Activated CD8-positive, alpha-beta memory T cell treated with anti-CD3 and anti-CD28 coated beads, Interleukin-2, amount 10 ng/mL, durations not matched to agents 7 days and 5 days (primary cell): ENCODE measurements at regions of chr16 and their contacts with region 1.

Region 1: GRCh38 chr16:1300664-1301476 is 8.6 kb upstream of the UBE2I start:
- DNase-seq: peak; percentile 84
- ATAC-seq: peak; percentile 77
- H3K4me3 Mint-ChIP-seq: no peak overlapping the region
- H3K27ac Mint-ChIP-seq: no peak overlapping the region
- H3K4me1 Mint-ChIP-seq: peaks cover 32% of the 10 kb centered on the region
- H3K27me3 Mint-ChIP-seq: peaks cover 4% of the 10 kb centered on the region

Region 2: GRCh38 chr16:1167276-1168107 is 133.4 kb before region 1 on chr16:
- CTCF ChIA-PET with region 1: no interaction called
- DNase-seq: no peak
- ATAC-seq: no peak
- H3K4me3 Mint-ChIP-seq: no peak overlapping the region
- H3K27ac Mint-ChIP-seq: no peak overlapping the region
- H3K4me1 Mint-ChIP-seq: no peaks in the 10 kb centered on the region
- H3K27me3 Mint-ChIP-seq: no peaks in the 10 kb centered on the region

Region 3: DNA sequence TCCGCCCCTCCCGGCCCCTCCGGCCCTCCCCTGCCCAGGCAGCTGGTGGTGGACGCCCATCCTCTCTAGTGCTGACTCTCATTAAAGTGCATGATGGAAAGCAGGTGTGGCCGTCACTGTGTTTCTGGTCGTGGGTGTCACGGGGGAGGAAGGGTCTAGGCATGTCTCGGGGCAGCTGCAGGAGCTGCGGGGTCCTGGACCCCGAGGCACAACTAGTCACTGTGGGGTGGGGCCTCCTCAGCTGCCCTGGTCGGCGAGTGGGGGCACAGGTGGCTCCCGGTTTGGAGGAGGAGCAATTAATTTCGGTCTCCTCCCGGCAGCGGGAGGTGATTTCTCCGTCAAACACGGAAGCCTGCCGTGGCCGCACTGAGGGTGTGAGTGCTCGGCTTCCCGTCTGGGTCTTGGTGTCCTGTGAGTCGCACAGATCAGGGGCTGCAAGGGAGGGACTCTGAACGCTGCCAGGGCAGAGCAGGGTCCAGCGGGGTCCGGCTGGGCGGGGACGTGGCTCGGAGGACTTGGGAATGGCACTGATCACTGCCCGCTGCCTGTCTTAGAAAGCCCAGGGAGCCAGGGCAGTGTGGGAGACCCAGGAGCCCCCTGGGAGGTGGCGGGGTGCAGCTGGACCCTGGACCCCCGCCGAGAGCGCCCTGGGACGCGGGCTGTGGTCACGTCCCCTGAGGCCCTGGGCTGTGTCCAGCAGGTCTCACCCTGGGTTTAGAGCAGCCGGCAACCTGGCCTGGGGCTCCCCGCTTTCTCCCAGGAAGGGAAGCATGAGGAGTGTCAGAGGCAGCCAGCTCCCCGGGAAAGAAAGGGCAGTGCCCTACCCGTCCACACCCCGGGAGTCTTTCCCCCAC is 41.7 kb before region 1 on chr16:
- CTCF ChIA-PET with region 1: no interaction called
- DNase-seq: no peak
- ATAC-seq: no peak
- H3K4me3 Mint-ChIP-seq: no peak overlapping the region
- H3K27ac Mint-ChIP-seq: no peak overlapping the region
- H3K4me1 Mint-ChIP-seq: peaks cover 2% of the 10 kb centered on the region
- H3K27me3 Mint-ChIP-seq: peaks cover 18% of the 10 kb centered on the region

Region 4: DNA sequence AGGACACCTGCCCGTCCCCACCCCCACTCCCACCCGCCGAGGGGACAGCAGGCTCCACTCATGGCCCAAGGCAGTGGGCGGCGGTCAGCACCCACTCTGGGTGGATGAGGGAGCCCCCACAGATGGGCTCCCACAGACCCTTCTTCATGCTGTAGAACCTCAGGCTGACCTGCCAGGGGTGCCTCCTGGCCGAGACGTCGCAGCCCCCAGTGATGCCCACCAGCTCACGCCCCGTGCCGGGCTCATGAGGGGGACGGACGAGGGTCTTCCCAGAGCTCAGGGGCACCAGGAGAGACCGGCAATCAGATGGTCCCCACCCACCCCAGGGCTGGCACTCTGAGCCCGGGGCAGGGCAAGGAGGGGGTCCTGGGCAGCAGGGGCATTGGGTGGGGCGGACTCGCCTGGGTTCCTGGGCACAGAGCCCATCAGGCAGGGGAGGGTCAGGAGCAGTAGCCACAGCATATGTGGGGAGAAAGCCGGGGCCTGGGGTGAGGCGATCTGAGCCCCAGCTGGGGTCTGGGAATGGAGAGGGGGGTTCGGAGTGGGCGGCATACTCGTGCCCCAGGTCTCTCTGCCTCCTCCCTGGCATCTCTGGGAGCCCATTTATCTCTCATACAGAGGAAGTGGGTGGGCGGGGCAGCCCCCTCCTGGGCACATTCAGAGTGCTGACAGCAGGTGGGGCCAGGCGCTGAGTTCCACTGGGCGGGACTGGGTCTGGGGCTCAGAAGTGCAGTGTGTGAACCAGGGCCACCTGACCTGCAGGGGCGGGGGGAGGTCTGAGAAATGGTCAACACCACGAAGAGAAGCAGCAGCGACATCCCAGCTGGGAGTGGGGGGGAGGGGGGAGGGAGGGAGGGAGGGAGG is 12.0 kb before region 1 on chr16:
- CTCF ChIA-PET with region 1: interaction called, 10 read pairs
- DNase-seq: no peak
- ATAC-seq: no peak
- H3K4me3 Mint-ChIP-seq: no peak overlapping the region
- H3K27ac Mint-ChIP-seq: no peak overlapping the region
- H3K4me1 Mint-ChIP-seq: no peaks in the 10 kb centered on the region
- H3K27me3 Mint-ChIP-seq: peaks cover 49% of the 10 kb centered on the region

Region 5: GRCh38 chr16:1351582-1352362 is 50.9 kb after region 1 on chr16 and contains the starts of genes GNPTG and TSR3:
- CTCF ChIA-PET with region 1: no interaction called
- DNase-seq: peak; percentile 88
- ATAC-seq: peak; percentile 89
- H3K4me3 Mint-ChIP-seq: peak within 1 kb of the TSS; percentile 83
- H3K27ac Mint-ChIP-seq: peak within 1 kb of the TSS; percentile 76
- H3K4me1 Mint-ChIP-seq: peaks cover 35% of the 10 kb centered on the region
- H3K27me3 Mint-ChIP-seq: no peaks in the 10 kb centered on the region
- total RNA-seq, gene GNPTG: 29.3 to 33.0 TPM
- total RNA-seq, gene TSR3: 52.9 to 57.8 TPM